GM13977 (cell line): ENCODE measurements at regions of chr11 and their contacts with region 1.

Region 1: DNA sequence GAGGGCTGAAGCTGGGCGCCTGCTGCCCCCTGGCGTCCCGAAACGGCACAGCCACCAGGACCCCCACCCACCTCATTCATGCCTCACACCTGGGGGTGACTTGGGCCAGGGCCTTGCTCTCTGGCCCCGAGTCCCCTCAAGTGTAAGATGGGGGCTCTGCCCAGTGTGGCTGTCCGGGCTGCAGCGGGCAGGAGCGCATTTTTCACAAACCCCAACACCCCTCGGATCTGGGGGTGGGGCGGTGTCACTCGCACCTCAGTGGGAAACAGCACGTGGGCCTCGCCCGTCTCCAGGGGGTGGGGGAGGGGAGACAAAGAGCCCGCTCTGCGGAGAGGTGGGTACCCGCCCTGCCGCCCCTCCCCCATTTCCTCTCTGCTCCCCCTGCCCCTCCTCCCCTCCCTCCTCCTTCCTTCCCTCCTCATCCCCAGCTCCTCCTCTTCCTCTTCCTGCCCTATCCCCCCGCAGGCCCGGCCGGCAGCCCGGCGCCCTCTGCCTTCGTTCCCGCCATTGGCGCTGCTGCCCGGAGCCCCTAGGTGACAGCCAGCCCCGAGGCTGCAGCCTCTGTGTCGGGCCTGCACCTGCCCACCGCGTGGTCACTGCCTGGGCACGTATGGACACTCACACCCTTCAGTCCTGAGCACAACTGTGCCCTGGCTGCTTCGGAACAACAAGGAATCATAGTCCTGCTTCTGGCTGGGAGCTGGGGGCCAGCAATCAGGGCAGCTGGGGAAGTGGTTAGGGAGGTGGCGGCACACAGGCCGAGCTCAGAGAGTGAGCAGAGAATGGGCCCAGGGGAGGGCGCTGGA is 6.8 kb upstream of the CDKN1C start:
- DNase-seq: peak; percentile 86
- CTCF ChIP-seq: peak; percentile 87

Region 2: GRCh38 chr11:2420502-2421225 is 471.8 kb before region 1 on chr11:
- in situ Hi-C with region 1: loop called (anchors 10 kb)
- DNase-seq: peak; percentile 97
- CTCF ChIP-seq: peak; percentile 99

Region 3: GRCh38 chr11:2532704-2533586 is 359.5 kb before region 1 on chr11:
- in situ Hi-C with region 1: loop called (anchors 10 kb)
- DNase-seq: peak; percentile 92
- CTCF ChIP-seq: peak; percentile 99

Region 4: DNA sequence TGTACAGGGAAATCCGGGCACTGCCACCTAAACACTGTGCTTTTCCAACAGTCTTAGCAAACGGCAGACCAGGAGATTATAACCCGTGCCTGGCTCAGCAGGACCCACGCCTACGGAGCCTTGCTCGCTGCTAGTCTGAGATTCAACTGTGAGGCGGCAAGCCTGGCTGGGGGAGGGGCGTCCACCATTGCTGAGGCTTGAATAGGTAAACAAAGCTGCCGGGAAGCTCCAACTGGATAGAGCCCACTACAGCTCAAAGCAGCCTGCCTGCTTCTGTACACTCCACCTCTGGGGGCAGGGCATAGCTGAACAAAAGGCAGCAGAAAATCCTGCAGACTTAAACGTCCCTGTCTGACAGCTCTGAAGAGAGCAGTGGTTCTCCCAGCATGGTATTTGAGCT is 1639.3 kb after region 1 on chr11:
- in situ Hi-C with region 1: no loop called
- DNase-seq: no peak
- CTCF ChIP-seq: no peak